Activated B cell treated with CpG ODN at 0.5 μM for 24 hours (primary cell): ENCODE measurements at regions of chr19 and their contacts with region 1.

Region 1: GRCh38 chr19:14073261-14073924 is 807 bp downstream of the MISP3 start:
- DNase-seq: peak; percentile 88
- ATAC-seq: peak; percentile 66
- H3K4me3 Mint-ChIP-seq: peak overlapping the region; percentile 86
- H3K27ac Mint-ChIP-seq: no peak overlapping the region
- H3K4me1 Mint-ChIP-seq: peaks cover 19% of the 10 kb centered on the region
- H3K27me3 Mint-ChIP-seq: no peaks in the 10 kb centered on the region
- CTCF ChIP-seq: no peak

Region 2: DNA sequence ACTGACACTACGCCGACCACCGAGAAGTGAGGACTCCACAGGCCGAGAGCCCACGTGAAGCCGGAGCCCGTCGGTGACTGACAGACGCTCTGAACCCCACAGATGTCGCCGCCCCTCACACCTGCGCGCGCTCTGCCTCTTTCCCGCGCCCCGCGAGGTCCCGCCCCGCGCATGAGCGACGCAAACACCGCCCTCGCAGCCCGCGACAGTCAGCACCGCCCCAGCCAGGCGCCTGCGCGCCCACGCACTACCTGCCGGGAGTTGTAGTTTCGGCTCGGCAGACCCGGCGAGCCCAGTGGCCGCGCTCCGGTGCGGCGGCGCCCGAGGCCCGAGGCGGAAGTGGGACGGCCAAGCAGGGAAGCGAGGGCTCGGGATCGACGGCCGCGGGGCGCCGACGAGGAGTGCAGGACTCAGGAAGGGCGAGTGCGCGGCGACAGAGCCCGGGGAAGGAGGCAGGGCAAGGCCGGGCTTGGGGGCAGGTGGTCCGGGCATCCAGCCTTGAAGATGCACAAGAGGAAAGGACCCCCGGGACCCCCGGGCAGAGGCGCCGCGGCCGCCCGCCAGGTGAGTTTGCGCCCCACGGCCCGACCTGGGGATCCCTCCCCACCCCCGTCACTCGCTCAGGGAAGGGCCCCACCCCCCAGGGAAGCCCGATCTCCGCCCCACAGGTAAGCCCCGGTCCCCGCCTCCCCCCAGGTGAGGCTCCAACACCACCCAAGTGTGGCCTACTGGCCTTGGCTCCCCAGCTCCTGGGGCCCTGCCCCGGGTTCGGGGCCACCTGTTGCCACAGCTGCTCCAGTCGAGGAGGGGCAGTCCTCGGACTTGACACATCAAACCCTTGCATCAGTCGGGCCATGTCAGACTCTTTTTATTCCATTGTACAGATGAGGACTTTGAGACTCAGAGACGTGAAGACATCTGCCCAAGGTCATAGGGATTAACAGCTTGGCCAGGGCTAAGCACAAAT is 167.2 kb before region 1 on chr19 and contains the starts of genes BRME1 and CC2D1A:
- CTCF ChIA-PET with region 1: interaction called, 8 read pairs
- POLR2A ChIA-PET with region 1: no interaction called
- intact Hi-C with region 1: loop called (anchors 1 kb)
- DNase-seq: peak; percentile 93
- ATAC-seq: peak; percentile 99
- H3K4me3 Mint-ChIP-seq: peak within 1 kb of the TSS; percentile 87
- H3K27ac Mint-ChIP-seq: peak within 1 kb of the TSS; percentile 78
- H3K4me1 Mint-ChIP-seq: peaks cover 11% of the 10 kb centered on the region
- H3K27me3 Mint-ChIP-seq: no peaks in the 10 kb centered on the region
- CTCF ChIP-seq: no peak
- total RNA-seq, gene BRME1: 1.2 and 2.0 TPM in 2 replicates
- total RNA-seq, gene CC2D1A: 32.4 and 35.6 TPM in 2 replicates

Region 3: DNA sequence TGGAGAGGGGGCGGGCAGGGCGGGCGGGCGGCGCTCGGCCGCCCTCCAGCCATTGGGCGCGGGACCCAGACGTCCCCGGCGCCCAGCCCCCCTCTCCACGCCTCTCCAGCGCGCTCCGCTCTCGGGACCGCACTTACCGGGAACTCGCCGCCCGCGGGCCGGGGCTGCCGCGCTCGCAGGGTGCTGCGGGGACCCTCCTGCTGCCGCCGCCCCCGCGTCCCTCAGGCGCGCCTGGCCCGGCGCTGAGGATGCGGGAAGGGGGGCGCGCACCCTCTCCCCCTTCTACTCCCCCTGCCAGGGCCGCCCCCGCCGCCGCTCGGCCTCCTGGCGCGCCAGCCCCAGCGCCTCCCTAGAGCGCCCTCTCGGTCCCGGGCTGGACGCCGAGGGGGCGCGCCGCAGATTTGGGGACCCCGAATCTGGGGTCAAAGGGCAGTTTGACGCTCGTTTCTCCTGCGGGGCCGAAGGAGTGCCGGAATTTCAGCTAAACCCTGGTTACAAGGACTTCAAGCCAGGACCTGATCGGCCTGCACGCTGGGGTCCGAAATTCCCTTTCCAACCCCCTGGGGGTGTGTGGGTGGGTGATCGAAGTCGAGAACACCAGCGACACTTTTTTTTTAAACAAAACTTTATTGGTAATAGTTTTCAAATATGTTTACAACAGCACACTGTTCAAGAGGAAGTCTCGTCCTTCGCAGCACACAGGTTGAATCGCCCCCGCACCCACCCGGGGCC is 17.9 kb after region 1 on chr19:
- CTCF ChIA-PET with region 1: interaction called, 6 read pairs
- POLR2A ChIA-PET with region 1: no interaction called
- intact Hi-C with region 1: loop called (anchors 1 kb)
- DNase-seq: peak; percentile 81
- ATAC-seq: peak; percentile 75
- H3K4me3 Mint-ChIP-seq: peak overlapping the region; percentile 99
- H3K27ac Mint-ChIP-seq: peak overlapping the region; percentile 99
- H3K4me1 Mint-ChIP-seq: peaks cover 18% of the 10 kb centered on the region
- H3K27me3 Mint-ChIP-seq: no peaks in the 10 kb centered on the region
- CTCF ChIP-seq: no peak

Region 4: GRCh38 chr19:14117668-14118164 is 44.3 kb after region 1 on chr19 and contains the start of gene PRKACA:
- CTCF ChIA-PET with region 1: interaction called, 5 read pairs
- POLR2A ChIA-PET with region 1: no interaction called
- intact Hi-C with region 1: loop called (anchors 2 kb)
- DNase-seq: peak; percentile 95
- ATAC-seq: peak; percentile 95
- H3K4me3 Mint-ChIP-seq: peak within 1 kb of the TSS; percentile 89
- H3K27ac Mint-ChIP-seq: peak within 1 kb of the TSS; percentile 68
- H3K4me1 Mint-ChIP-seq: peaks cover 42% of the 10 kb centered on the region
- H3K27me3 Mint-ChIP-seq: no peaks in the 10 kb centered on the region
- CTCF ChIP-seq: no peak
- total RNA-seq, gene PRKACA: 41.6 and 43.7 TPM in 2 replicates

Region 5: GRCh38 chr19:14127929-14128509 is 54.6 kb after region 1 on chr19:
- CTCF ChIA-PET with region 1: no interaction called
- POLR2A ChIA-PET with region 1: no interaction called
- intact Hi-C with region 1: no loop called
- DNase-seq: no peak
- ATAC-seq: no peak
- H3K4me3 Mint-ChIP-seq: no peak overlapping the region
- H3K27ac Mint-ChIP-seq: no peak overlapping the region
- H3K4me1 Mint-ChIP-seq: peaks cover 3% of the 10 kb centered on the region
- H3K27me3 Mint-ChIP-seq: no peaks in the 10 kb centered on the region
- CTCF ChIP-seq: no peak

Region 6: DNA sequence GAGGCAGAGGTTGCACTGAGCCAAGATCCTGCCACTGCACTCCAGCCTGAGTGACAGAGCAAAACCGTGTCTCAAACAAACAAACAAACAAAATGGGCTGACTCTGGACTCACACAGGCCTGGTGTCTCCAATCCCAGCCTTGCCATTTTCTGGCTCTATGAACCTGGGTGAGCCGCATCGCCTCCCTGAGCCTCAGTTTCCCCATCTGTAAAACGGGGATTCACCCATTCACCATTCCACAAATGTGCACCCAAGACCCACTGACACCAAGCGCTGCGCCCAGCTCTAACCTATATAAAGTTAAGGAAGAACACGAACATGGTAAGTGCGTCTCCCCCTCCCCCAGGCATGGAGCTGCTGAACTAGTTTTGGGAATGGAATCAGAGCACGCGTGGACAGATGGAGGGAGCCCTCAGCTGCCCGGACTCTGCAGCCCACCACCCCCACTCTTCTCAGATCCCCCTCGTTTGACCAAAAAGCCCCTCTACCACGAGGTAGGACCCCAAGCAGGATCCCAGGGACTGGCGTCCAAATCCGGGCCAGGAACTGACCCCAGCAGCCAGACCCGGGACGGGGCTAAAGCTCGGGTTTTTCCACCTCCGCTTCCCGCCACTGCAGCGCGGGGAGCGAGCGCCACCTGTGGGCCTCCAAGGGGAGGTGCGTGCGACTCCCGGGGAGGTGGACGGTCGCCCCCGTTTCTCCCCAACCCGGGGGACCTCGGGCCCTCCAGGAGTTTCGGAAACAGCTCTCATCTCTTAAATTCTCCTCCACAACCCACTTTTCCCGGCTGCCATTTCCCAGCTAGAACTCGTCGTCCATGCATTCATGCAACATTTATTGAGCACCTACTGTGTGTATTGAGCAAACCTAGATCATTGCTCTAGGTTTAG is 274.9 kb after region 1 on chr19:
- CTCF ChIA-PET with region 1: interaction called, 7 read pairs
- POLR2A ChIA-PET with region 1: no interaction called
- intact Hi-C with region 1: loop called (anchors 1 kb)
- DNase-seq: peak; percentile 66
- ATAC-seq: peak; percentile 80
- H3K4me3 Mint-ChIP-seq: peak overlapping the region; percentile 57
- H3K27ac Mint-ChIP-seq: peak overlapping the region; percentile 24
- H3K4me1 Mint-ChIP-seq: peaks cover 27% of the 10 kb centered on the region
- H3K27me3 Mint-ChIP-seq: no peaks in the 10 kb centered on the region
- CTCF ChIP-seq: peak; percentile 83

Region 7: GRCh38 chr19:14383661-14384555 is 310.5 kb after region 1 on chr19:
- CTCF ChIA-PET with region 1: no interaction called
- POLR2A ChIA-PET with region 1: no interaction called
- intact Hi-C with region 1: no loop called
- DNase-seq: peak; percentile 55
- ATAC-seq: peak; percentile 25
- H3K4me3 Mint-ChIP-seq: peak overlapping the region; percentile 93
- H3K27ac Mint-ChIP-seq: peak overlapping the region; percentile 93
- H3K4me1 Mint-ChIP-seq: peaks cover 54% of the 10 kb centered on the region
- H3K27me3 Mint-ChIP-seq: no peaks in the 10 kb centered on the region
- CTCF ChIP-seq: no peak

Region 8: DNA sequence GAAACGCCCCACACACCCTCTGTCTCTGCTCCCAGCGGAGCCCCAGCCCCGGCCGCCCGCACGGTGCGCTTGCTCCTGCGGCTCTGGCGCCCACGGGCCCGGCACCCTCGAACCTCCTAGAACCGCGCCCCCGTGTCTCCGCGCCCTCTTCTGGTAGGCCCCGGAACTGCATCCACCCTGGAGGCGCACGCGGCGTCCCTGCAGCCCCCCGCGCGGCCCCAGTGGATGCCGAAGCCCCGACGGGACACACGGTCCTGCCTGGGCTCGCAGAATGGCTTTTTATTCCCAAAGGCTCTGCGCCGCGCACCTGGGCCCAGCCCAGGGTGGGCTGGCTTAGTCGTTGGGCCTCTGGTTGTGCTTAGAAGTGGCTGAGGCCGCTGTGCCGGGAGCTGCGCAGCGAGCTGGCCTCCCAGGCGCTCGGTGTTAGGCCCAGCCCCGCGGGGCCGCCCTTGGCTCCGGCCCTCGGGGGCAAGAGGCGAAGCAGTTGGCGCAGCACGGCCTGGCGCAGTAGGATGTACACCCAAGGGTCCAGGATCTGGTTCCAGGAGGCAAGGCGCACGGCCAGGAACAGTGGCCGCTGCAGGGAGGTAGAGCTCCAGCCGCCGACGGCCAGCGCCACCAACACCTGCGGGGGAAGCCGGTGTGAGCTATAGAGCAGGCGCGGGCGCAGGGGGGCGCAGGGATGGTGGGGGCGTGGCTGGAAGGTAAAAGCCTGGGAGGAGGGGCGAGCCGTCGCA is 399.0 kb after region 1 on chr19:
- CTCF ChIA-PET with region 1: no interaction called
- POLR2A ChIA-PET with region 1: no interaction called
- intact Hi-C with region 1: loop called (anchors 10 kb)
- DNase-seq: peak; percentile 87
- ATAC-seq: peak; percentile 83
- H3K4me3 Mint-ChIP-seq: peak overlapping the region; percentile 24
- H3K27ac Mint-ChIP-seq: no peak overlapping the region
- H3K4me1 Mint-ChIP-seq: peaks cover 25% of the 10 kb centered on the region
- H3K27me3 Mint-ChIP-seq: peaks cover 28% of the 10 kb centered on the region
- CTCF ChIP-seq: peak; percentile 92